Thyroid gland (tissue), 4 donors: ENCODE measurements at regions of chr12 and their contacts with region 1.

Region 1: GRCh38 chr12:111313833-111314259 is 55.0 kb downstream of the PHETA1 start:
- DNase-seq: peak; percentile 62 to 71
- H3K4me3 ChIP-seq: no peak overlapping the region
- H3K27ac ChIP-seq: no peak overlapping the region
- H3K4me1 ChIP-seq: no peaks in the 10 kb centered on the region
- H3K27me3 ChIP-seq: no peaks in the 10 kb centered on the region
- CTCF ChIP-seq: peak; percentile 73 to 93 (median 84)
- POLR2A ChIP-seq: no peak

Region 2: GRCh38 chr12:110937104-110937641 is 376.7 kb before region 1 on chr12:
- intact Hi-C with region 1: loop called (anchors 10 kb)
- DNase-seq: peak; percentile 24 to 54
- H3K4me3 ChIP-seq: no peak overlapping the region
- H3K27ac ChIP-seq: no peak overlapping the region
- H3K4me1 ChIP-seq: peaks cover 0 to 5% of the 10 kb centered on the region in 2 donors
- H3K27me3 ChIP-seq: no peaks in the 10 kb centered on the region
- CTCF ChIP-seq: peak; percentile 69 to 93 (median 78)
- POLR2A ChIP-seq: no peak

Region 3: GRCh38 chr12:111024205-111024801 is 289.5 kb before region 1 on chr12:
- intact Hi-C with region 1: loop called (anchors 5 kb)
- DNase-seq: peak; percentile 53 to 73
- H3K4me3 ChIP-seq: no peak overlapping the region
- H3K27ac ChIP-seq: no peak overlapping the region
- H3K4me1 ChIP-seq: no peaks in the 10 kb centered on the region
- H3K27me3 ChIP-seq: no peaks in the 10 kb centered on the region
- CTCF ChIP-seq: peak; percentile 20 to 90 (median 75)
- POLR2A ChIP-seq: no peak

Region 4: GRCh38 chr12:111607239-111607638 is 293.4 kb after region 1 on chr12:
- intact Hi-C with region 1: no loop called
- DNase-seq: no peak
- H3K4me3 ChIP-seq: no peak overlapping the region
- H3K27ac ChIP-seq: no peak overlapping the region
- H3K4me1 ChIP-seq: no peaks in the 10 kb centered on the region
- H3K27me3 ChIP-seq: no peaks in the 10 kb centered on the region
- CTCF ChIP-seq: no peak
- POLR2A ChIP-seq: no peak